Gastrocnemius medialis (tissue), 4 donors: ENCODE measurements at regions of chr4 and their contacts with region 1.

Region 1: GRCh38 chr4:34826660-34827059 is 1417.7 kb downstream of the ARAP2 start:
- DNase-seq: no peak
- ATAC-seq: no peak
- H3K4me3 ChIP-seq: no peak overlapping the region
- H3K27ac ChIP-seq: no peak overlapping the region
- H3K4me1 ChIP-seq: no peaks in the 10 kb centered on the region
- H3K27me3 ChIP-seq: no peaks in the 10 kb centered on the region
- CTCF ChIP-seq: no peak
- POLR2A ChIP-seq: no peak

Region 2: GRCh38 chr4:34456158-34456557 is 370.5 kb before region 1 on chr4:
- in situ Hi-C with region 1: no loop called
- intact Hi-C with region 1: no loop called
- DNase-seq: no peak
- ATAC-seq: no peak
- H3K4me3 ChIP-seq: no peak overlapping the region
- H3K27ac ChIP-seq: no peak overlapping the region
- H3K4me1 ChIP-seq: no peaks in the 10 kb centered on the region
- H3K27me3 ChIP-seq: no peaks in the 10 kb centered on the region
- CTCF ChIP-seq: no peak
- POLR2A ChIP-seq: no peak

Region 3: GRCh38 chr4:34771632-34772031 is 55.0 kb before region 1 on chr4:
- in situ Hi-C with region 1: no loop called
- intact Hi-C with region 1: loop called (anchors 2 kb)
- DNase-seq: no peak
- ATAC-seq: no peak
- H3K4me3 ChIP-seq: no peak overlapping the region
- H3K27ac ChIP-seq: no peak overlapping the region
- H3K4me1 ChIP-seq: peaks cover 4 to 6% of the 10 kb centered on the region in 2 donors
- H3K27me3 ChIP-seq: no peaks in the 10 kb centered on the region
- CTCF ChIP-seq: no peak
- POLR2A ChIP-seq: no peak

Region 4: DNA sequence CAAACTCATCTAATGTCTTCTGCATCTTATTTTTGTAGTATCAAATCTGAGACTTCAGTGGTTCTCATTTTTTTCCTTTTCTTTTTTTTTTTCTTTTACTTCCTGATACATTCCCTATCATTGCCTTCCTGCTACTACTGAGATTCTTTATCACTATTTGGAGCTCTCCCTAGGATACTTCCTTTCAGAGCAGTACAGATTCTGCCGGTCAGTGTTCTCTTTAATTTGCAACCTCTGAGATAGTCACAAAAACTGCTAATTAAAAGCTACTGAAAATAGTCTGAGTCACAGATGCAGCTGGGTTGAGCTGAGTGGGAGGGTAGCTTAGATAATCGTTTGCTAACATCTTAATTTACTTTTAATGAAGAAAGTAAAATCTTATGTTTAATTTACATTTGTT is 138.0 kb after region 1 on chr4:
- in situ Hi-C with region 1: no loop called
- intact Hi-C with region 1: no loop called
- DNase-seq: no peak
- ATAC-seq: no peak
- H3K4me3 ChIP-seq: no peak overlapping the region
- H3K27ac ChIP-seq: no peak overlapping the region
- H3K4me1 ChIP-seq: no peaks in the 10 kb centered on the region
- H3K27me3 ChIP-seq: no peaks in the 10 kb centered on the region
- CTCF ChIP-seq: no peak
- POLR2A ChIP-seq: no peak